HepG2 (cell line): ENCODE measurements at regions of chr1 and their contacts with region 1.

Region 1: GRCh38 chr1:150696590-150697524 is at the start of gene GOLPH3L:
- DNase-seq: peak; percentile 99
- ATAC-seq: peak; percentile 100
- H3K4me3 ChIP-seq: peak within 1 kb of the TSS; percentile 73 to 99 (median 83)
- H3K27ac ChIP-seq: peak within 1 kb of the TSS; percentile 73
- H3K4me1 ChIP-seq: 0 out of 2 replicates have a peak, but pooled peaks cover 17% of the 10 kb centered on the region
- H3K27me3 ChIP-seq: no peaks in the 10 kb centered on the region; a peak in 2 of 5 replicates
- CTCF ChIP-seq: no peak
- EP300 ChIP-seq: no peak
- POLR2A ChIP-seq: peak; percentile 72 to 73
- RAD21 ChIP-seq: no peak
- total RNA-seq, gene GOLPH3L: 12.8 and 19.3 TPM in 2 replicates

Region 2: DNA sequence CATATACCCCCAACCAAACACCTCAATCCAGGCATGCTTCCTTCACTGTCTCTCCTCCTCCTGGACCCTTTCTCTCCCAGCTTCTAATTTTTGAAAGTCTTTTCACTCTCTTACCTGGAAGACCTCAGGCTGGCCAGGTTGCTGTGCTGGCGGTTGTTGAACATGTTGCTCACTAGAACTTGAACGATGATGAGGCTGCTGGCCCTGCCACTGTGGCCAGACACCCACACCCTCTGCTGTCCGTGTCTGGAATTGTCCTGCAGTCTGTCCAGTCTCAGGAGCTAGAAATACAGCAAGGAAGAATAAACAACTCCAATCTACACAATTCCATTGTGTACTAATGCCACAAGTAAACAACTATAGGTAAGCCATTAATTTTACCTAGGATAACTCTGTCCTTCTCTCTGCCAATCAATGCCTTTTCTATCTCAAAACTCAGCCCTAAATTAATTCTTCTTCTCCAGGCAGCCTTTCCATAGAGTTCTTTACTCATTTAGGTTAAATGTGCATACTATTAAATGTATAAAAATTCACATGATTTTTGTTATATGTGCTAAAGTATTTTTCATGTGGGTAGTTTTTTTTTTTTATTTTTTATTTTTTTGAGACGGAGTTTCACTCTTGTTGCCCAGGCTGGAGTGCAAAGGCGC is 116.3 kb after region 1 on chr1:
- CTCF ChIA-PET with region 1: no interaction called
- POLR2A ChIA-PET with region 1: no interaction called
- in situ Hi-C with region 1: no loop called
- intact Hi-C with region 1: loop called (anchors 2 kb)
- DNase-seq: peak; percentile 36
- ATAC-seq: peak; percentile 93
- H3K4me3 ChIP-seq: no peak overlapping the region
- H3K27ac ChIP-seq: no peak overlapping the region
- H3K4me1 ChIP-seq: no peaks in the 10 kb centered on the region
- H3K27me3 ChIP-seq: no peaks in the 10 kb centered on the region
- CTCF ChIP-seq: peak; percentile 84
- EP300 ChIP-seq: no peak
- POLR2A ChIP-seq: no peak
- RAD21 ChIP-seq: peak; percentile 79